Cardiac septum (tissue), 1 donor: ENCODE measurements at regions of chr7 and their contacts with region 1.

Region 1: DNA sequence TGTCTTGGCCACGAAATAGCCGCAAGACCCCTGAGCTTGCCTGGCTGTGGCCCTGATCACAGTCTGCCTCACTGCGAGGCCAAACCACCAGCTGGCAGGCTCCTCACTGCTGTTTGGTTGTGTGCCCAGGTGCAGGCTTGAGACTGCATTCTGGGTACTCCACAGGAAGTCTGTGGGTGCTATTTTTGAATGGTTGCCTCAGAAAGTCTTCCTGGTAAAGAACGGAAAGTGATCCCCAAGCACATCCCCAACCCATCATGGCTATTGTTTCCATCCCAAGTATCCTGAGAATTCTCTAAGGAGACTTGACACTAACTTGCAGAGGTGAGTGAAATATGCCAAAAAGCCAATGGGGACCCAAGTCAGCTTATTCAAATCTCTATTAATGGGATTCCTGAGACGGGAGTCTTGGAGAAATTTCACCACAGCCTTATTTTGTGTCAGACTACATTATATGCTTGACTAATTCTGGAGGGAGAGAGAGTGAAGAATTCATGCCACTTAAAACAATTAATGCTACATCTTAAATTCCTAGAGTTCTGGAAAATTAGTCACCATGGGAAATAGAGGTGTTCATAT is 170.9 kb downstream of the RAMP3 start:
- DNase-seq: no peak

Region 2: DNA sequence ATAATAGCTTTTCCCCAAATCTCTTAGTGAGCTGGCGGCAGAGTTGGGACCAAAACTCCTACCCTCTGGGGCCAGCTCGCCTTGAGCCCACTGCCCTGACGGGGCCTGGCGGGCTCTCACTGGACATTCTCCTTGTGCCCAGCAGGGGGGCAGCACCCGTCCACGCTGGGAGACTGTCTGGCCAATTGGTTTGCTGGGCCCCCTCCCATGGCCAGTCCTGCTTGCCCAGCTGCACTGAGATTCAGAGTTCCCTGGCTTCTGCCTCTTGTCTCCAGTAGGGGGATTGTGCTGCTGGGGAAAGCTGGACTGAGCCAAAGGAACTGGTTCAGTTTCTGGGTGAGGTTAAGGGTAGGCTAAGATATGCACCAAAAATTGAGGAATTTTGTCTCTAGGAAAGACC is 111.1 kb before region 1 on chr7:
- intact Hi-C with region 1: no loop called
- DNase-seq: no peak

Region 3: GRCh38 chr7:45292481-45292880 is 36.0 kb before region 1 on chr7:
- intact Hi-C with region 1: loop called (anchors 2 kb)
- DNase-seq: no peak